ENCODE measurements at regions of chr17 and their contacts with region 1.

Region 1: GRCh38 chr17:58417300-58418092 is at the start of gene RNF43:
- DNase-seq: peak; percentile 55 to 95 (median 68)

Region 2: GRCh38 chr17:58249270-58250133 is 168.0 kb before region 1 on chr17:
- intact Hi-C with region 1: loop called (anchors 1 kb)
- DNase-seq: peak in 9 of 10 donors; percentile 38 to 95 (median 75)

Region 3: DNA sequence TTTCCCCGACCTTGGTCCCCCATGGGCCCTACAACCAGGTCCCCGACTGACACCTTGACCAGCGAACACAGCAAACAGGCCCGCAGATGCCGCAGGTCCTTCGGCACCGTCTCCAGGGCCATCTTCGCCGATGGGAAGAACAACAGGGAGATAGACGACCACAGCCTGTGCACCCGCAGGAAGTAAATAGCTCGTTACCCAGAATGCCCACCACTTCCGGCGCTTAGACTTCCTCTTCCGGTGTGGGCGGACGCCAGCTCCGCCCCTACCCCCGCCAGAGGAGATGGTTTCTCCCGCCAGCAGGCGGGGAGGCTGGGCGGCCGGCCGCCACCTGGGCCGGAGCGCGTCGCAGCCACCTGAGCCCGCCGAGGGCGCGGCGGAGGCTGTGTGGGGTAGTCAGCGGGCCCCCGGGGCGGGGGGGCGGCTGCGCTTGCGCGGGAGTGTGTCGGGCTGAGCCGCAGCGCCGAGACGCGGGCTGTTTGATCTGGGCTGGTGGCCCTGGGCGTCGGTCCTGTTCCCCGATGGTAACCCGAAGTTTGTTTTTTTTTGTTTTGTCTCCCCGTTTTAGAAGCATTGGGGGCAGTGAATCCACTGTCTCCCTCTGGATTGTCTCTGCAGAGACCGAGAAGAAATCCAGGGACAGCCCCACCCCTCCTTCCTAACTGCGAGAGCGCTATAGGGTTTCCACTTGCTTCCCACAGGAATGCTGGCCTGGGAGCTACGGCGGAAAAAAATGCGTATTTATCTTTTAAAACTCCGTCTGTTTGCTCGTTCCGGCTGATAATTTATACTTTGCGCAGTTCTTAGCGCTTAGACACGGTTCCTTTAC is 65.3 kb before region 1 on chr17 and contains the start of gene SUPT4H1:
- intact Hi-C with region 1: loop called (anchors 5 kb)
- DNase-seq: peak; percentile 78 to 97 (median 82)

Region 4: DNA sequence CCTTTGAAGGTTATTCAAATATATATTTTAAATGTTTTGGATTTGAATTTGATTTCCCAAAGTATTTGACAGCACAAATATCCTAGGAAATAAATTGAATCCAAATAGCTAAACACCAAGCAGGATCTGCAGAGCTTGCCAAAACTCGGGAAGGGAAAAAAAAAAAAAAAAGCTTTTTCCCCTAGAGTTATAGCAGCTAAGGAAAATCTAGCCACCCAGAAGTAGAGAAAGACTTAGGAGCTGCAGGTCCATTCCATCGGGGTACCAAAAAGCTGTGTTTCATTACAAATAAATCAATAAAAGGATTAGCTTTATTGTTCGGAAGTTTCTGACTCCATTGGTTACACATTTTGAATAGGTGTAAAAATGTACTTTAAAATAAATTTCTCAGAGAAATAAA is 51.4 kb after region 1 on chr17:
- intact Hi-C with region 1: no loop called
- DNase-seq: no peak